ENCODE measurements at regions of chr7 and their contacts with region 1.

Region 1: DNA sequence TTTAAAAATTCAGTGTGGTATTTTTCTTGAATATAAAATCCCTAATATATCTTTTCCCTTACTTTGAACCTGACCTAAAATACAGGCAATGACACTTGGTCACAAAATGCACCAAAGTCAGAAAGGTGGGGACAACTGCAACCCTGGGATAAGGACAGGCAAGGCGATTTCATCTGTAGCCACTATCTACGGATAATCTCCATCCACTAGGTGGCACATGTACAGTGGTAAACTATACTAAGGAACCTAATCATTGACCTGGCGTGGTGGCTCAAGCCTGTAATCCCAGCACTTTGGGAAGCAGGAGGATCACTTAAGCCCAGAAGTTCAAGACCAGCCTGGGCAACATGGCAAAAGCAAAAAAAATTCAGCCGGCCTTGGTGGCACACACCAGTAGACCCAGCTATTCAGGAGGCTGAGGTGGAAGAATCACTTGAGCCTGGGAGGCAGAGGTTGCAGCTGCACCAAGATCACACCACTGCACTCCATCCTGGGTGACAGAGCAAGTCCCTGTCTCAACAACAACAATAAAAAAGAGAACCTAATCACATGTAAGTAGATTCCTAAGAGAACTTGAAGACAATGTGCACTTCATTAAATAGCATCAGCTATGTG is 98.9 kb downstream of the KMT2C start:
- DNase-seq: no peak
- ATAC-seq: peak; percentile 67 to 83 (median 76)
- H3K4me3 ChIP-seq: no peak overlapping the region
- H3K27ac ChIP-seq: no peak overlapping the region
- H3K4me1 ChIP-seq: peaks cover 77% of the 10 kb centered on the region
- H3K27me3 ChIP-seq: no peaks in the 10 kb centered on the region
- CTCF ChIP-seq: peak; percentile 55

Region 2: DNA sequence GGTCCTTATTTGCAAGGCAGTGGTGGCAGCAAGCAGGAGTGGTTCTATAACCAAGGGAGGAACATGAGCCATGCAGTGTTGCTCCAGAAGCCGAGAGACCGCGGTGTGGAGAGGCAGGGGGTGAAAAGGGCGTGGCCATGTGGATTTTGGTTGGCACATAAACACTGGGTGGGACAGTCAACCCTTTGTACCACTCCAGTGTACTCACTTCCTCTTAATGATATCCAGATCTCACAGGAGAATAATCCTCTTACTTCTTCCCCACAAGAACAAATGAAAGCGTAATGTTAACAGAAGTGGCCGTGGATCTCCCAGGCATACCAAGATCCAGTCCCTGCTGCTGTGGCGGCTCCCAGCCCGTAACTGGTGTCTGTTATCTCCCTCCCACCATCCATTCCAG is 296.6 kb after region 1 on chr7:
- intact Hi-C with region 1: no loop called
- DNase-seq: no peak
- ATAC-seq: no peak
- H3K4me3 ChIP-seq: no peak overlapping the region
- H3K27ac ChIP-seq: no peak overlapping the region
- H3K4me1 ChIP-seq: no peaks in the 10 kb centered on the region
- H3K27me3 ChIP-seq: no peaks in the 10 kb centered on the region
- CTCF ChIP-seq: no peak

Region 3: DNA sequence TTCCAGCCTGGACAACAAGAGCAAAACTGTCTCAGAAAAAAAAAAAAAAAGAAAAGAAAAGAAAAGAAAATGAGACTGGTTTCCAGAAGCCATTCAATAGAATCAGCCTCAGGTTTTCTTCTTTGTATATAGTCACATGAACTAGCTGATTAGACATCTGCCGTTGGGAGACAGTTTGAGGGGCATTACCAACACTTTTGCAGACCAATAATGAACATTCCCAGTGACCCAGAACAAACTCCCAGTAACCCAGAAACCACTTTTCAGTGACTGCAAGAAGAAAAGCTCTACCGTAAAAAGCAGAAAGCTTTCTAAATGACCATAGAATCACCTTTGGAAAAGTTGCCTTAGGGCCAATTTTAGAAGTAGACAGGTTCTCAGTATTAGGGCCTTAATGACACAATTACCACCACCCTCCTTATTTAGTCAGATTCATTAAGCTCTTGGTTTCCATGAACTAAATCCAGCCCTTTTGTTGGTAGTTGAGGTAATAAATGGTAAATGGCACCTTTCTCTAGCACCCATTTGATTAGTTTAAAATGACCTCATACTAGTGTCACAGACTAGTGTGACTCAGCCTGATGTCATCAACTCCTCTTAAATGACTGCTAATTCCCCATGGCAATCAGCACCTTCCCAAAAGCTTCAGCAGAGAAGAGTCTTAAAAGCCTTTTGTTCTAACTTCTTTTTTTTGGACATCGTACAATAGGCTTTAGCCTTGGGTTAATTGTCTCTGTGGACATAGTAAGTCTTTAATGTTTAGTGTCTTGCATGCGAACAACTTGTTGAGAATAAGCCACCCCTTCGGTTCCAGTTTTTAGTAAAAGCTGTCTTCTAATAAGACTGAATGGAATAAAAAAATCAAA is 372.7 kb after region 1 on chr7:
- intact Hi-C with region 1: loop called (anchors 5 to 10 kb)
- DNase-seq: no peak
- ATAC-seq: no peak
- H3K4me3 ChIP-seq: no peak overlapping the region
- H3K27ac ChIP-seq: no peak overlapping the region
- H3K4me1 ChIP-seq: no peaks in the 10 kb centered on the region
- H3K27me3 ChIP-seq: no peaks in the 10 kb centered on the region
- CTCF ChIP-seq: no peak